ENCODE measurements at regions of chr19 and their contacts with region 1.

Region 1: GRCh38 chr19:3163230-3163886 is 15.2 kb upstream of the S1PR4 start:
- DNase-seq: peak; percentile 72
- ATAC-seq: peak; percentile 90

Region 2: DNA sequence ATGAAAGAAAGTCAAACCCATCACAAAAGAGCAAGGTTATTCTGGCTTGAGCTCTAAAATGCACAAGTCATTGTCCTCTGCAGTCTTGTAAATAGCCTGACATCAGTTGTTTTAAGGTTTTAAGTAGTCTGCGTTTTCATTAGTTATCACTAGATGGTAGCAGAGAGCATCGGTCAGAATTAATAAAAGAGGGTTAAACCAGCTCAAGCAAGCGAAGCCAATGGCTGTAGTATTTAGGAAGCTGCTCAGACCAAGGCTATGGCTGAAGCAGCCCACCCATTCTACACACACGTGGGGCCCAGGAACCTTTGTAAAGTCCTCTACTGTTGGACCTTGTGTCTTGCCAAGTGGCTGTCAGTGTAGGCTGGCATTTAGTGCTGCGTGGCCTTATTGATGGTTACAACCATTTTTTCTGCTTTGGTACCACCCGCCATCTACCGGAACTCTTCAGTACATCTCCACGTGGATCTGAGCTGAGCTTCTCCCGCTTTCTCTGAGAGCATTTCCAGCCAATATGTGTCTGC is 275.9 kb before region 1 on chr19:
- intact Hi-C with region 1: loop called (anchors 5 kb)
- DNase-seq: no peak
- ATAC-seq: peak; percentile 76

Region 3: GRCh38 chr19:3029065-3029923 is 134.1 kb before region 1 on chr19 and contains the start of gene TLE2:
- intact Hi-C with region 1: no loop called
- DNase-seq: peak; percentile 50
- ATAC-seq: peak; percentile 66
- total RNA-seq, gene TLE2: 66.5 TPM

Region 4: DNA sequence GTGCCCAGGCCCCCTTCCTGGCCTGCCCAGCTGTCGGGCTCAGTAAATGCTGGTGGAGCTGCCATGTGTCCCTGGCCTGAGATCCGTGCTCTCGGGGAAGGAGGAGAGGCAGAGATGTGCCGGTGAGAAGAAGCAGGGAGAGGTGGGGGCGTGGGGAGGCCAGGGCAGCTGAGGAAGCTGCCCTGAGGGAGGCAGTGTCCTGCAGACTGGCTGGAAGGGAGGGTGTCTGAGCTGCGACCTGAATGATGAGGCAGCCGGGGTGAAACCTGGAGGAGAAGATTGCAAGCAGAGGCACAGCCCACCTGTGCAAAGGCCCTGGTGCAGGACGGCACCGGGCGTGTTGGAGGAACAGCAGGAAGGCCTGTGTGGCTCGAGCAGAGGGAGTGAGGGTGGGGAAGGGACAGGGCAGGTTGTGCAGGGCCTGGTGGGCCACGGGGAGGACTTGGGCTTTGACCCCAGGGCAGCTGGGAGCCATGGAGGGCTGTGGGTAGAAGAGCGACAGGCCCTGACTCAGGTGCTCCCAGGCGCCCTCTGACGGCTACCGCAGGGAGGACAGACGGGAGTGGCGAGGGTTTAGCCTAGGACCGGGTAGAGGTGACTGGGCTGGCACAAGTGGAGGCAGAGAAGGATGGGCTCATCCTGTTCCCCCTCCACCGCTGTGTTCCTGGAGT is 47.1 kb after region 1 on chr19:
- intact Hi-C with region 1: no loop called
- DNase-seq: peak; percentile 65
- ATAC-seq: peak; percentile 70

Region 5: DNA sequence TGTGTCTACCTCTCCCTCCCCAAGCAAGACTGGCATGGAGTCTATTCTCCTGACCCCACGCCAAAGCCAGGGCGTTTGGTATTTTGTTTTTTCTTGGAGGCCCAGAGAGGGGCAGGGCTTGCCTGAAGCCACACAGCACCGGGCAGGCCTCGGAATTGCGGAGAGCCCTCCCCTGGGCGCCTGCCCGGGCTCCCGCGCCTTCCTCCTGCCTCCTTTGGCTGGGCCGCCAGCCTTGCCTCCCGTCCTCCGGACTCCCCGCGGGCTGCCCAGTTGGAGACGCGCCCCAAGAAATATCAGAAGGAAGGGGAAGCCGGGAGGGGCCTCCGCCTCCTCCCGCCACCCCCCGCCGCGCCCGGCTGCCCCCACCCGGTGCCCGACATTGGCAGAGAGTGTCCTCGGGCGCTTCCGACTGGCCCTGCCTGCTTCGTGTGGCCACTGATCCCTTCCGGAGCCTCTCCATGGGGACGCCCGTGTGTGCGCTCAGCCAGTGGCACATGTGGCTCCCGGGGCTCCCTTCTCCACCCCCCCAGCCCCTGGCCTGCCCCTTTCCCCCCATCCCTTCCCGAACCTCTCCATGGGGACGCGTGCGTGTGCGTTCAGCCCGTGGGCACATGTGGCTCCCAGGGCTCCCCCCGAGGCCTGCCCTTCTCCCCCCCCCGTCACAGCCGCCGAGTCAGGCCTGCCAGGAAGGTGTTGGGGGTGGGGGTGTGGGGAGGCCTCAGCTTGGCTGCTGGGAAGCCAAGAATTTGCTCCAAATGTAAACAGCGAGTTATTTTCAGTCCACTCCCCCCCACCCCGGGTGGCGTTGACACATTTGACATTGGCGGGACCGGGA is 240.3 kb after region 1 on chr19:
- intact Hi-C with region 1: no loop called
- DNase-seq: peak; percentile 93
- ATAC-seq: peak; percentile 74